ENCODE measurements at regions of chr21 and their contacts with region 1.

Region 1: GRCh38 chr21:14877570-14878228 is 187.1 kb downstream of the NRIP1 start:
- DNase-seq: peak; percentile 75
- H3K4me3 ChIP-seq: no peak overlapping the region
- H3K27ac ChIP-seq: peak overlapping the region; percentile 58
- H3K4me1 ChIP-seq: peaks cover 47% of the 10 kb centered on the region
- H3K27me3 ChIP-seq: no peaks in the 10 kb centered on the region
- CTCF ChIP-seq: no peak
- POLR2A ChIP-seq: no peak

Region 2: GRCh38 chr21:14977814-14978213 is 100.1 kb after region 1 on chr21:
- CTCF ChIA-PET with region 1: interaction called, 3 read pairs
- POLR2A ChIA-PET with region 1: no interaction called
- dilution Hi-C with region 1: no loop called
- intact Hi-C with region 1: loop called (anchors 10 kb)
- DNase-seq: no peak
- H3K4me3 ChIP-seq: no peak overlapping the region
- H3K27ac ChIP-seq: no peak overlapping the region
- H3K4me1 ChIP-seq: no peaks in the 10 kb centered on the region
- H3K27me3 ChIP-seq: no peaks in the 10 kb centered on the region
- CTCF ChIP-seq: no peak
- POLR2A ChIP-seq: no peak

Region 3: DNA sequence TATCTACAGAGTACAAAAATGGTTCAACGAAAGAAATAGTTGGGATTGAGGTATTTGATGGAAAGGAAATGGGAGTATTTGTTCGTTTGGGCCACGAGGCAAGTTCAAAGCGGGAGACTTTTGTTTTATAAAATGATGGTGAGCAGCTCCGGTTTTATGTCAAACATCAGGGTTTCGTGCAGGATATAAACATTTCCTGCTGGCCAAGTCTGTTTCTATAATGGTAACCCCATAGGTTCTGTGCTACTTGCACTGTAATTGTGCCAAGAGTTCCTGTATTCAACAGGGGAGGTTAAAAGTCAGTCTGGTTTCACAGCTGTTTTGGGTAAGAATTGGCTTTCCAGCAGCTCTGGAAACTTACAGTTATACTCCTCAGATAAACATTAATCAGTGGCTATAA is 477.4 kb after region 1 on chr21:
- CTCF ChIA-PET with region 1: no interaction called
- POLR2A ChIA-PET with region 1: no interaction called
- dilution Hi-C with region 1: no loop called
- intact Hi-C with region 1: loop called (anchors 5 kb)
- DNase-seq: peak; percentile 93
- H3K4me3 ChIP-seq: no peak overlapping the region
- H3K27ac ChIP-seq: peak overlapping the region; percentile 17
- H3K4me1 ChIP-seq: peaks cover 32% of the 10 kb centered on the region
- H3K27me3 ChIP-seq: no peaks in the 10 kb centered on the region
- CTCF ChIP-seq: no peak
- POLR2A ChIP-seq: no peak